Prostate gland (tissue), 2 donors: ENCODE measurements at regions of chr10 and their contacts with region 1.

Region 1: DNA sequence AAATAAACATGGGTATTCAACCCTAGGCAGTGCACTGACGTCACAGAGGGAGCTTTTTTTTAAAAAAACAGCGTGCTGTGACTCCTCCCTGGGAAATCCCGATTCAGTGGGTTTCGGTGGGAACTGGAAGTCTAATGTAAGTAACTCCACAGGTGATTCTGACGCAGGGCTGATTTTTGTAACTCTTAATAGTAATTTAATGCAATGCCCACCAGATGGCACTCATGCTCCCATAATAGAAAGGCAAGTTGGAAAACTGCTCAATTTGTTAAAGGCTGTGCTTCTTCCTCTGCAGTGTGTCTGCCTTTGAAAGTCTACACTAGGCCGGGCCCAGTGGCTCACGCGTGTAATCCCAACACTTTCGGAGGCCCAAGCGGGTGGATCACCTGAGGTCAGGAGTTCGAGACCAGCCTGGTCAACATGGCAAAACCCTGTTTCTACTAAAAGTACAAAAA is 10.9 kb upstream of the RSU1 start:
- DNase-seq: peak; percentile 53
- H3K4me3 ChIP-seq: no peak overlapping the region
- H3K27ac ChIP-seq: no peak overlapping the region
- H3K4me1 ChIP-seq: no peaks in the 10 kb centered on the region
- H3K27me3 ChIP-seq: no peaks in the 10 kb centered on the region
- CTCF ChIP-seq: peak in 3 of 4 experiments; percentile 57 to 66 (median 62)
- POLR2A ChIP-seq: no peak

Region 2: DNA sequence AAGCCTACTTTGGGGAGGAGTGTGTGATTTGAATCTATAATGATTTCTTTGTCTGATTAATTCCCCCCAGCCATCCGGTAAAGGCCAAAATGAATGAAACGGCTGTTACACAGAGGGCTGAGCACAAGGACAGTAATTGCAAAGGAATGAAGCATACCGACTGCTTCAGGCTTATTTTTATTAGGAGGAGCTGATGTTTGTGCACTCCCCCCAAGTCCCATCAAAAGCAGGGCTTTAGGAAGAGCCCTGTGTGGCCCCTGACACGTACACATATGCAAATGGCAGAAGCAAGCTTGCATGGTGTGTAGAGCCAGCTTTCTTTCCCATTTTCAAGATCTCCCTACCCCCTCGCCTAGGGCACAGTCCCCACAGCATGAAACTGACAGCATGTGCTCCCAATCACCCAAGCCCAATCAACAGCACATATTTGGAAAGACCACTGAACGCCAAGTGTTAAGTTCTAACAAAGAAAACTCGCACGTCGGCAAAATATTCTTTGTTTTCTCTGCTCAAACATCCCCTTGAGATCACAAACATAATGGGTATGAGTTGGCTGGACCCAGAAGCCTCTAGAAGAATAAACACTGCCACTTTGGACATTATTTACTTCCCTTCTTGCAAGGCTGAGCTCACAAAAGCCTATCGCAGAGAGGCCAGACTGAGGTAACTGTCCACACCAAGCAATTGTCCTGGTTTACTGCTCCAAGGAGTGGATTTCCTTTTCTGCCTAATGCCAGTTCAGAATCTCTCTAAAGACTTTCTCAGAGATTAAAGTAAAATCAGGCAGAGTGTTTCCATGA is 158.5 kb after region 1 on chr10:
- intact Hi-C with region 1: no loop called
- DNase-seq: peak; percentile 51
- H3K4me3 ChIP-seq: no peak overlapping the region
- H3K27ac ChIP-seq: peak overlapping the region in 1 of 2 donors; percentile 39
- H3K4me1 ChIP-seq: peaks cover 6% of the 10 kb centered on the region
- H3K27me3 ChIP-seq: no peaks in the 10 kb centered on the region
- CTCF ChIP-seq: no peak
- POLR2A ChIP-seq: no peak

Region 3: DNA sequence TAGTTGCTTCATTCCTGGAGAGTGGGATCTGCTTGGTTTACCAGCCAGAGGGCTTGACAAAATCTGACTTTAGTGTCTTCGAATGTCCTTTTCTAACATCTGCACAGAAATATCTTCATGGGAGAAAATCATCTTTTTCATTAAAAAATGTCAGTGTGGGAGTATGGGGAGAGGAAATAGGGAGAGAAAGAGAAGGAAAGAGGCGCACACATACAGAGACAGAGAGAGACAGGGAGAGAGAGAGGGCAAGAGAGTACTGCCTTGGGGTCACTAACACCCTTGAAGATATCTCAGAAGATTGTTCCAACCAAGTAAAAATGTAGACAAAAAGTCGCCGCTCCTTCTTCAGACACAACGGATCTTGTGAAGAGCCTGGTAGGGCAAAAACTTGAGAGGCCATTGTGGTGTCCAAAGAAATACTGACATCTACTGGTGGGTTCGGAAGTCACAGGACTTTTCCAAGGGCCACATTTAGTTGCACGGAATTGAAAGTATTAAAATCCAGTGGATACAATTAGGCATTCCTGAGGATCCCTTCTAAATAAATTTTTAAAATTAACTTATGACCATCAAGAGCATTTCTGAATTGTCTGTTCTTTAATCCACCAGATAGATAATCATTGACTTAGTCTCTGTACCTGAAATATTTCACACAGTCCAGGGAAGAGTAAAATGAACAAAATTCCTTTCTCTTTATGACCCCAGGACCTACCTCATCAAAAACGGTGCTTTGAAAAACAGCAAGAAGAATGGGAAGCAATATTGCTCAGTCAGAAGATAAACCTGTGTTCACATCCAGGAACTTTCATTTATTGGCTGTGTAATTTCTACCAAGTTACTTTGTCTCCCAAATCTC is 429.6 kb after region 1 on chr10:
- intact Hi-C with region 1: loop called (anchors 5 kb)
- DNase-seq: peak; percentile 62
- H3K4me3 ChIP-seq: no peak overlapping the region
- H3K27ac ChIP-seq: no peak overlapping the region
- H3K4me1 ChIP-seq: no peaks in the 10 kb centered on the region
- H3K27me3 ChIP-seq: no peaks in the 10 kb centered on the region
- CTCF ChIP-seq: peak; percentile 51 to 84 (median 78)
- POLR2A ChIP-seq: no peak